ENCODE measurements at regions of chr19 and their contacts with region 1.

Region 1: GRCh38 chr19:11090054-11090900 is 1.0 kb downstream of the LDLR start:
- DNase-seq: peak; percentile 83 to 92
- H3K4me3 ChIP-seq: peak overlapping the region; percentile 67 to 100 (median 94)
- H3K27ac ChIP-seq: peak overlapping the region; percentile 96
- H3K4me1 ChIP-seq: peaks cover 7 to 15% (median 10%) of the 10 kb centered on the region in 4 experiments
- H3K27me3 ChIP-seq: no peaks in the 10 kb centered on the region
- CTCF ChIP-seq: no peak
- EP300 ChIP-seq: no peak
- POLR2A ChIP-seq: peak; percentile 70 to 98
- RAD21 ChIP-seq: no peak

Region 2: GRCh38 chr19:10960314-10961072 is 129.8 kb before region 1 on chr19 and contains the start of gene SMARCA4:
- CTCF ChIA-PET with region 1: no interaction called
- POLR2A ChIA-PET with region 1: interaction called, 14 read pairs
- DNase-seq: peak; percentile 88 to 96
- H3K4me3 ChIP-seq: peak within 1 kb of the TSS; percentile 98 to 100 (median 99)
- H3K27ac ChIP-seq: peak within 1 kb of the TSS; percentile 85
- H3K4me1 ChIP-seq: peaks cover 0 to 12% (median 6%) of the 10 kb centered on the region in 4 experiments; a peak in 6 of 7 replicates
- H3K27me3 ChIP-seq: no peaks in the 10 kb centered on the region
- CTCF ChIP-seq: no peak
- EP300 ChIP-seq: peak in 1 of 2 experiments; percentile 17; a peak in 1 of 3 replicates
- POLR2A ChIP-seq: peak in 1 of 2 experiments; percentile 65; a peak in 1 of 3 replicates
- RAD21 ChIP-seq: no peak
- total RNA-seq, gene SMARCA4: 263 TPM in 2 replicates

Region 3: DNA sequence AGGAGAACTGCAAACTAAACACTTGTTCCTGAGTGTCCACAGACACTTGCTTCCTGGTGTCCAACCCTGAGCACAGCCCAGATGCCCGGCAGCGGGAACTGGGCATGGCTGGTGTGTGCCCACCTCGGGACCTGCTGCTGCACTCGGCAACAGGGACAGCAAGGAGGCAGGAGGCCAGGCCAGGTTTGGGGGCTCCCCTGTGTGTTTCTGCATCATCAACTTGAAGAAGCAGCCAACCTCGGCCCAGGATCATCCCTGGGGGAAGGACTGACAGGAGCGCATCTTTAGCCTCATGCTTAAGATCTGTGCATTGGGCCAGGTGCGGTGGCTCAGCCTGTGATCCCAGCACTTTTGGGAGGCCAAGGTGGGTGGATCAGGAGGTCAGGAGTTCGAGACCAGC is 36.1 kb before region 1 on chr19:
- CTCF ChIA-PET with region 1: no interaction called
- POLR2A ChIA-PET with region 1: interaction called, 10 read pairs
- DNase-seq: no peak
- H3K4me3 ChIP-seq: no peak overlapping the region
- H3K27ac ChIP-seq: no peak overlapping the region
- H3K4me1 ChIP-seq: no peaks in the 10 kb centered on the region
- H3K27me3 ChIP-seq: no peaks in the 10 kb centered on the region; a peak in 1 of 7 replicates
- CTCF ChIP-seq: no peak
- EP300 ChIP-seq: no peak
- POLR2A ChIP-seq: no peak
- RAD21 ChIP-seq: no peak

Region 4: GRCh38 chr19:11064831-11065303 is 25.4 kb before region 1 on chr19:
- CTCF ChIA-PET with region 1: interaction called, 4 read pairs
- POLR2A ChIA-PET with region 1: interaction called, 16 read pairs
- DNase-seq: no peak
- H3K4me3 ChIP-seq: no peak overlapping the region
- H3K27ac ChIP-seq: no peak overlapping the region
- H3K4me1 ChIP-seq: peaks cover 0 to 3% (median under 1%) of the 10 kb centered on the region in 4 experiments; a peak in 1 of 7 replicates
- H3K27me3 ChIP-seq: no peaks in the 10 kb centered on the region
- CTCF ChIP-seq: no peak; a peak in 1 of 4 replicates
- EP300 ChIP-seq: no peak
- POLR2A ChIP-seq: no peak
- RAD21 ChIP-seq: no peak

Region 5: DNA sequence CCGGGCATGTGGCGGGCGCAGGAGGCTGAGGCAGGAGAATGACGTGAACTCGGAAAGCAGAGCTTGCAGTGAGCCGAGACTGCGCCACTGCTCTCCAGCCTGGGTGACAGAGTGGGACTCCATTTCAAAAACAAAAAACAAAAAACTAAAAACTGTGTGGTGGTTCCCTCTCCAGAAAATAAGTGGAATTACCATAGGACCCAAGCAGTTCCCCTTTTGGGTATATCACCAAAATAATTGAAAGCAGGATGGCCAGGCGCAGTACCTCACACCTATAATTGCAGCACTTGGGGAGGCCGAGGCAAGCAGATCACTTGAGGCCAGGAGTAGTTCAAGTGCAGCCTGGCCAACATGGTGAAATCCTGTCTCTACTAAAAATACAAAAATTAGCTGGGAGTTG is 16.7 kb before region 1 on chr19:
- CTCF ChIA-PET with region 1: interaction called, 4 read pairs
- POLR2A ChIA-PET with region 1: interaction called, 16 read pairs
- DNase-seq: no peak
- H3K4me3 ChIP-seq: no peak overlapping the region
- H3K27ac ChIP-seq: no peak overlapping the region
- H3K4me1 ChIP-seq: peaks cover 0 to 3% (median 0%) of the 10 kb centered on the region in 4 experiments; a peak in 1 of 7 replicates
- H3K27me3 ChIP-seq: no peaks in the 10 kb centered on the region
- CTCF ChIP-seq: no peak
- EP300 ChIP-seq: no peak
- POLR2A ChIP-seq: no peak
- RAD21 ChIP-seq: no peak